ENCODE measurements at regions of chr3 and their contacts with region 1.

Region 1: DNA sequence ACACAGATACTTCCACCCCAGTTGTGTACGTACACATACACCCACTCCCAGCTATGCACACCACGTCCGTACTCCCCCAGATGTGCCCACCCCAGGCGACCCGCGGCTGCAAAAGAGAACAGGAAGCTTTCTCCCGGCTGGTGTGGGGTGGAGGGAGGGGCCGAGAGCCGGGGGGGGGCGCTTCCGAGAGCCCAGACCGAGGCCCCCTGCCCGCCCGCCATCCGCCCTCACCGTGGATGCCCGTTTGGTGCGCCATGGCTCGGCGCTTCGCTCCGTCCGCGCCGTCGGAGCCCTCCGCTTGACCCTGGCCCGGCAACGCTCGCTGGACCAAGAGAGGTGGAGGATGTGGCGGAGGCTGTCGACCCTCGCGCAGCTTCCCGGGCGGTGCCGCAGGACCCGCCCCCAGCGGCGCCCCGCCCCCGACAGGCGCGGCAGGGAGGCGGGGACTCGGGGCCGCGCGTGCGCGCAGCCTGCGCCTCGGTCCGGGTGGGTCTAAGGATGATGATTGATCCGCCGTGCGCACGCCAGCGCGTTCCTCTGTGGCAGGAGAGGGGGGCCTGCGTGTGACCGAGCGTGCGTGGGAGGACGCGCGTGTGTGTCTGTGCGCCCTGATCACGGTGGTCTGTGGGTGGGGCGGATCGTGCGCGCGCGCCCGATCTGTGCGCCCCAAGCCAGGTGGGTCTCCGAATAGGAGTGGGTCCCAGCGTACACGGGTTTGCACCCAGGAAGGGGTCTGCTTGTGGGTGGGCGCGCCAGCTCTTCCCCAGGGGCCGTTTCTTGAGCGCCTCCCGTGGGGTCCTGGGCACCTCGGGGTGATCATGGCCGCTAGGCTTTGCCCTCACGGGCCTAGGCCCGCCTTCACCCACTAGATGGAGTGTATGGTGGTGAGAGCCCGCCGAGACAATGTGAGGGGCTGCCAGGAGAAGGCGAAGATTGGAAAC is at the start of gene TWF2:
- DNase-seq: peak; percentile 91
- H3K4me3 ChIP-seq: peak within 1 kb of the TSS; percentile 80
- H3K27ac ChIP-seq: peak within 1 kb of the TSS; percentile 100
- H3K4me1 ChIP-seq: peaks cover 35% of the 10 kb centered on the region
- H3K27me3 ChIP-seq: no peaks in the 10 kb centered on the region
- total RNA-seq, gene TWF2: 124 and 137 TPM in 2 replicates

Region 2: DNA sequence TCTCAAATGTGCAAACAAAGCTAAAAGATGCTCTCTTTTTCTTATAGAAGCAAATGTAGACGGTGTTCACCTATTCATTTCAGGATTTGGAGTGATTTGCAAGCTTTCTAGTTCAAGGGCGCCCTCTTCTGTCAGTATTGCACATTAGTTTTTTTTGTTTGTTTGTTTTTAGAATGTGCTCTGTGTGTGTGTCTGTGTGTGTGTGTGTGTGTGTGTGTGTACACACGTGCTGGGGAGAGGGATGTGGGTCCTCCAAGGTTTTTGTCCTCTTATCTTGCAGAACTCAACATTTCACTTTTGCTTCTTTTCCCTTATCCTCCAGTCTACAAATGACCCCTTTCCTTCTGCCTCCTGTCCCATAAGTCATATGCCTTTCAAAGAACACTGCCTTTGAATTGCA is 100.6 kb after region 1 on chr3:
- in situ Hi-C with region 1: loop called (anchors 10 kb)
- DNase-seq: peak; percentile 73
- H3K4me3 ChIP-seq: no peak overlapping the region
- H3K27ac ChIP-seq: no peak overlapping the region
- H3K4me1 ChIP-seq: peaks cover 11% of the 10 kb centered on the region
- H3K27me3 ChIP-seq: no peaks in the 10 kb centered on the region

Measured in GM23248 (cell line).